Mucosa of descending colon (tissue), 3 donors: ENCODE measurements at regions of chr9 and their contacts with region 1.

Region 1: GRCh38 chr9:136093995-136094881 is 851 bp downstream of the NACC2 start:
- DNase-seq: peak; percentile 66 to 83 (median 77)
- ATAC-seq: peak; percentile 52
- H3K4me3 ChIP-seq: peak overlapping the region; percentile 72
- H3K4me1 ChIP-seq: peaks cover 16% of the 10 kb centered on the region
- CTCF ChIP-seq: no peak

Region 2: GRCh38 chr9:136051517-136052432 is 42.5 kb before region 1 on chr9:
- intact Hi-C with region 1: loop called in 1 of 2 experiments (anchors 5 kb)
- DNase-seq: peak; percentile 81 to 86 (median 82)
- ATAC-seq: peak; percentile 89
- H3K4me3 ChIP-seq: no peak overlapping the region
- H3K4me1 ChIP-seq: peaks cover 32% of the 10 kb centered on the region
- CTCF ChIP-seq: no peak

Region 3: GRCh38 chr9:136143216-136144001 is 49.2 kb after region 1 on chr9:
- intact Hi-C with region 1: no loop called
- DNase-seq: peak in 1 of 3 donors; percentile 43
- ATAC-seq: no peak
- H3K4me3 ChIP-seq: no peak overlapping the region
- H3K4me1 ChIP-seq: no peaks in the 10 kb centered on the region
- CTCF ChIP-seq: no peak